Lower leg skin (tissue), 4 donors: ENCODE measurements at regions of chr9 and their contacts with region 1.

Region 1: DNA sequence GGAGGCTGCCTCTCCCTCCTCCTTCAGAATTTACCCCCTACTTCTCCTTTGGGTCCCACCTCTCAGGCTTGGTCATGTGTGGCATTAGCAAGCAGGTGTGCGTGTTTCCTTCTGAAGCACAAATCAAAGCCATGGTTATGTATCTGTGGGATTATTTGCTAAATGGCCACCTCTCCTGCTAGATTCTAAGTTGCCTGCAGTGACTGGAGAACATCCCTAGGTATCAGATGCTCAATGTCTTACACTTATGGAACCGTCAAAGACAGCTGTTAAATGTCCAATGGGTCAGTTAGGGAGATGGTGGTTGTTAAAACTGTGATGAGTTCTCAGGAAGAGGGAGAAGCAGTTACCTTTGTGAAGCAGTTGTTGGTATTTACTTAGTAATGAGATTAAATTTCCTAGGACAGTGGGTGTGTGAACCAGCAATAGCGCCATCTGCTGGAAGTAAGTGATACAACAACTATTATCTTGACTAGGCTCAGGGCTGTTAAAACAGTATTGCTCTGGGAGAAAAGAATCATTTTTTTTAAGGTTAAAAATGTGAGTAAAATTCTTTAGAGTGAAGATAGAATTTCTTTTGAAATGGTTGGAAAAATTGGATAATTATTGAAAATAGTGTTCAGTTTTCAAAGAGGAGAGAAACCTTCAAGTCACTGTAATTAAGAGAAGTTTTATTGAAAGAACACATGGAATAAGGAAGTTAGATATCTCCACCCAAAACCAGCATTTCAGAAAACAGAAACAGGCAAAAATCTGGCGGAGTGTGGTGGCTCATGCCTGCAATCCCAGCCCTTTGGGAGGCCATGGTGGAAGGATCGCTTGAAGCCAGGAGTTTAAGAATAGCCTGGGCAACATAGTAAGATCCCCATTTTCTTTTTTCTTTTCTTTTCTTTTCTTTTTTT is 71.3 kb downstream of the TMC1 start:
- DNase-seq: no peak
- H3K4me3 ChIP-seq: no peak overlapping the region
- CTCF ChIP-seq: peak in 1 of 3 donors; percentile 42
- POLR2A ChIP-seq: no peak

Region 2: GRCh38 chr9:72292256-72292682 is 300.5 kb before region 1 on chr9:
- intact Hi-C with region 1: loop called (anchors 5 kb)
- DNase-seq: no peak
- H3K4me3 ChIP-seq: no peak overlapping the region
- CTCF ChIP-seq: no peak
- POLR2A ChIP-seq: no peak

Region 3: DNA sequence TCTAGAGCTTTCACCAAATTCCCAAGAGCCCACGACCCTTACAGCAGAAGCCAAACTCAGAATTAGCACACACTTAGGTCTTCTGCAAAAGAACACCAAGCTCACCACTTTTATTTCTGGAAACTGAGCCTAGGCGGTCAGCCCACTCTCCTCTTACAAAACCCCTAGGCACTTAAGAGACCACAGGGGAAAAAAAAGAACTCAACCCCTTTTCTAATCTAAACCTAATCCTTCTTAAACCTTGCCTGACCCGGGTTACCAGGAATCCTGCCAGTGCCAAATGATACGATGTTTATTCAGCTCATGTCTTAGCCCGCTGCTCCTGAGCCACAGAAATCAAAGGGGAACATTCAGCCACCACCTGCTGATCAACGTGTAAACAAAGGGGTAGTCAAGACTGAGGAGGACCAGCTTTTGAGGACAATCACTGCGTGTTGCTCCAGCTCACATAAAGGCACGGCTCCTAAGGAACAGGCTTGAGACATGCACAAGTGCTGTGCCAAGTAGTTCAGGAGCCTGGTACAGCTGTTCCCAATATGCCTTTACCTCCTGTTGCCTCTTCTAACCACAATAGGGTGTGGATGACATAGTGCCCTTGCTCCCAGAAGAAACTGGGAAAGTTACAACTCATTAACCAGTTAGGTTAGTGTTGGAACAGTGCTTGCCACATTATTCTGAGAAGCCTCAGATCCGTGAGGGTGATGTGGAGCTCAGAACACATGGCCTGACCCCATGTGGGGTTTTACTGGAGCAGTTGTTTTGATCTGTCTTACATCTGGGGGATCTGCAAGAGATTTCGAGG is 277.0 kb before region 1 on chr9:
- intact Hi-C with region 1: no loop called
- DNase-seq: peak in 1 of 2 donors; percentile 48
- H3K4me3 ChIP-seq: no peak overlapping the region
- CTCF ChIP-seq: no peak
- POLR2A ChIP-seq: no peak

Region 4: GRCh38 chr9:72364679-72365524 is 227.9 kb before region 1 on chr9 and contains the start of gene ZFAND5:
- intact Hi-C with region 1: loop called (anchors 5 kb)
- DNase-seq: peak; percentile 98 to 99
- H3K4me3 ChIP-seq: peak within 1 kb of the TSS; percentile 100
- CTCF ChIP-seq: no peak
- POLR2A ChIP-seq: peak in 1 of 2 donors; percentile 98
- total RNA-seq, gene ZFAND5: 99.6 to 305 (median 127) TPM